HEK293 (cell line): ENCODE measurements at regions of chr15 and their contacts with region 1.

Region 1: GRCh38 chr15:42548253-42549031 is at the starts of genes HAUS2 and LRRC57:
- H3K4me3 ChIP-seq: peak within 1 kb of the TSS; percentile 84
- H3K27ac ChIP-seq: peak within 1 kb of the TSS; percentile 61
- H3K4me1 ChIP-seq: no peaks in the 10 kb centered on the region
- CTCF ChIP-seq: 0 out of 2 replicates have a peak, but pooled peaks have one; percentile 11

Region 2: DNA sequence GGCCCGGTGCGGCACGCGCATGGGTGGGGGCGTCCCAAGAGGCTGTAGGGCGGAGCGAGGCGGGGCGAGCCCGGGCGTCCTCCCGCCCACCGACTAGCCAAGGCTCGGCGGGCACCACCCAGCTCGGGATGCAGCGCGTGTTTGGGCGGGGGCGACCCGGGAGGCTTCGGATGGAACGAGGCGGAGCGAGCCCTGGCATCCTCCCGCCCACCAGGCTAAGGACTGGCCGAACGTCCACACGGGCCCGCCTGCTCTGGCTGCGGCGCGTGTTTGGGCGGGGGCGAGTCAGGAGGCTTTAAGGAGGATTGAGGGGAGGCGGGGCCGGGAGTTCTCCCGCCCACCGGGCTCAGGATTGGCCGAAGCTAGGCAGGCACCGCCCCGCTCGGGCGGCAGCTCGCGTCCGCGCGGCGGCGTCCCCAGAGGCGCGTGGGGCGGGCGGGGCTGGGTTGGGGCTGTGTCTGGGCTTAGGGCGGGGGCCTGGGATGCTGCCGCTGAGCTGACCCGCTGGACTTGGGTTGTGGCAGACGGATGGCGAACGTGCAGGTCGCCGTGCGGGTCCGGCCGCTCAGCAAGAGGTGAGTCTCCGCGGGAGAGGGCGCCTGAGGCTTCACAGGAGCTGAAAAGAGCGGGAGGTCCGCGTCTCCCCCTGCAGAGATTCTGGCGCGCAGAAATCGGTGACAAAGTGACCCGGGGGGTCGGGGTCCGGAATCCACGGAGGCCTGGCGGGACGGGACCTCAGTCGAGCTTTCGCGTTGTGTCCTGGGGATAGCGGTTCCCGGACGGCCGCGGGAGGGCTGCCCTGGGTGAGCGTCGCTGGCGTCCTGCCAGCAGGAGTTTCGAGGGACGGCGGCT is 27.0 kb after region 1 on chr15 and contains the start of gene STARD9:
- CTCF ChIA-PET with region 1: no interaction called
- POLR2A ChIA-PET with region 1: interaction called, 16 read pairs
- H3K4me3 ChIP-seq: peak within 1 kb of the TSS; percentile 67
- H3K27ac ChIP-seq: peak within 1 kb of the TSS; percentile 21; the same call in 1 of the 2 replicates
- H3K4me1 ChIP-seq: peaks cover 3% of the 10 kb centered on the region
- CTCF ChIP-seq: peak; percentile 23; the same call in 1 of the 2 replicates